Gastrocnemius medialis (tissue), 4 donors: ENCODE measurements at regions of chr12 and their contacts with region 1.

Region 1: GRCh38 chr12:10721651-10722501 is 1.2 kb downstream of the YBX3 start:
- DNase-seq: peak; percentile 98 to 99
- ATAC-seq: peak; percentile 69 to 72
- H3K4me3 ChIP-seq: peak overlapping the region; percentile 83 to 99 (median 88)
- H3K27ac ChIP-seq: peak overlapping the region; percentile 97 to 100 (median 98)
- H3K4me1 ChIP-seq: peaks cover 14 to 30% of the 10 kb centered on the region in 2 donors
- H3K27me3 ChIP-seq: no peaks in the 10 kb centered on the region
- CTCF ChIP-seq: no peak
- POLR2A ChIP-seq: peak; percentile 72 to 86

Region 2: DNA sequence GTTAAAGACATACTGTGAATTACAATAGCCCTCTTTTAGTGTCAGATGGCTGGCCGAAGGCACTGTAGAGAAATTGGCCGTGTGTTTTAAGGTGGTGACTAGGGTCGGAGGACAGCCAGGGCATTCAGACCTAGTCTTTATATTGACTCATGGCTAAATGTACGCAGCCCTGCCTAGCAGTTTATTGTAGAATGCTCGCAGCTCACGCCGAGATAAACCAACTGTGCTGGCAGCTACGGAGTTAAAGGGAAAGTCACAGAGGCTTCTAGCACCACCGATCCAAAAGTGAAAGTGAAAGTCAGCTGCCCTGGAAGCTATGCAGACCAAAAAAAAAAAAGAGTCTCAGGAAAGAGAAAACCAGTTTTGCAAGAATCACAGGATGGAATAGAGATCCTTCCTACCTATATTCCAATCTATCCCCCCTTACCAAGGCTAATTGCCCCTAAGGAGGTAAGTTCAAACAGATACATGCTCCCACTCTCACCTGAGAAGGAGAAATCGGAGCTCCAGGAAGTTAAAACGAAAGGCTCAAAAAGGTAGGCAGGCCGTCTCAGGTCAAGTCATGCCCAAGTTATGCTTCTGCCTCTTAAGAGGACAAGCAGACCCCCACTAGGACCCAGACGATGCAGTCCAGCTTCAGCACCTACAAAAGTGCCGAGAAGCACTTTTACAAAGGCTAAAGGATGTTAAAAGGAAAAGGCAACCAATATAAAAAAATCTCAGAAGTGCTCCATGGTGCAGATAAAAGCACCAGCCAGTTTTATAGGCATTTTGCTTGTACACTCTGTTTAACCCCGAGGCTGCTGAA is 356.9 kb before region 1 on chr12:
- in situ Hi-C with region 1: no loop called
- intact Hi-C with region 1: loop called (anchors 10 kb)
- DNase-seq: peak; percentile 30 to 56
- ATAC-seq: peak; percentile 81 to 86
- H3K4me3 ChIP-seq: peak overlapping the region; percentile 79 to 90 (median 84)
- H3K27ac ChIP-seq: peak overlapping the region; percentile 88 to 94 (median 90)
- H3K4me1 ChIP-seq: peaks cover 6 to 36% of the 10 kb centered on the region in 2 donors
- H3K27me3 ChIP-seq: no peaks in the 10 kb centered on the region
- CTCF ChIP-seq: no peak
- POLR2A ChIP-seq: peak in 1 of 2 donors; percentile 12

Region 3: DNA sequence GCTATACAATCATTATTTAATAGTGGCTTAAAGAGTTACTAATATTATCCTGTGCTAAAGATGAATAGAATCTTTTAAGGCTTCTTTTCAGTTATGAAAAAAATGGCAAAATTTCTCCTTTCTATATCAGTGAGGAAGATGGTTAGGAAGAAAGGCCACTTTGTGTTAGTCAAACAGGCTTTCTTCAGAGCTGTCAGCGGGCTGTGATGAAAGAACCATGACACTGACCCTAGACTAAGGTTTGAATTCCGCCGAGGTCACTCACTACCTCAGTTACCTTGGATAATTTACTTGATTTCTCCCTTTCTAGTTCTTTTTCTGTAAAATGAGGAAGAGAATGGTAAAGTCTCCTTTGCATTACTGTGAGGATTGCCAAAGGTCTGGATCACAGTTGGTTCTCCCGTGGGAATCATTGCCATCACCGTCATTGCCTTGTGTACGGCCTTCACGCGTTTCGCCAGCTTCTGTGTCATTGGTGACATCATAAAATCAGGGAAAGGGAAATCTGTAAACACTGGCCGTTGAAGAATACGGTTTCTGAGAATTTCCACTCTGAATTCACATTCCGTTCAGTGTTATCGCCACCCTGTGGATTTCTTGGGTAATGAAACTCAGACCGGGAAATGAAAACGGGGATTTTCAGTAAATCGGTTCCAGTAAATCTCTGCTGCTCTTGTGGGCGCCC is 28.0 kb after region 1 on chr12:
- in situ Hi-C with region 1: no loop called
- intact Hi-C with region 1: loop called (anchors 1 kb)
- DNase-seq: peak; percentile 45 to 66
- ATAC-seq: peak; percentile 93 to 97
- H3K4me3 ChIP-seq: peak overlapping the region; percentile 42 to 51 (median 48)
- H3K27ac ChIP-seq: peak overlapping the region; percentile 50 to 72 (median 62)
- H3K4me1 ChIP-seq: peaks cover 0 to 5% of the 10 kb centered on the region in 2 donors
- H3K27me3 ChIP-seq: no peaks in the 10 kb centered on the region
- CTCF ChIP-seq: peak; percentile 86 to 93 (median 89)
- POLR2A ChIP-seq: peak in 1 of 2 donors; percentile 13

Region 4: DNA sequence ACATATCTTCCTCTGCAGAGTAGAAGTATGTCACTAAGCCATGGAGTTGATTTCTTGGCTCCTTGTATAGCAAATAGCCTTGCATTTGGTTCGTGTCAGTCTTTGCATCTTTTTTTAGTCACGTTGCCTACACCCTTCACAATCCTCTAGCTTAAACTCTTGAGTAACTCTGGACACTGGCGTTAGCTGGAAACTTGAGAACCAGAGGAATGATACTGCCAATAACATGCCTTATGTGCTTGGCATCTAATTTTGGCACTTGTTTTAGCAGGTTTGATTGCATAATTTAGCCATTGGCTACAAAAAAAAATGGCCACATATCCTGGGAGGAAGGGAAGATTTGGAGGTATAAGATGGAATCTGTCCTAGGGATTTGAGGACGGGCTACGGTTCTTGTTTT is 1063.8 kb after region 1 on chr12:
- in situ Hi-C with region 1: loop called in 1 of 4 experiments (anchors 25 kb)
- intact Hi-C with region 1: loop called (anchors 5 kb)
- DNase-seq: peak; percentile 55 to 68
- ATAC-seq: peak; percentile 97
- H3K4me3 ChIP-seq: no peak overlapping the region
- H3K27ac ChIP-seq: peak overlapping the region; percentile 80 to 86 (median 84)
- H3K4me1 ChIP-seq: peaks cover 28 to 40% of the 10 kb centered on the region in 2 donors
- H3K27me3 ChIP-seq: no peaks in the 10 kb centered on the region
- CTCF ChIP-seq: no peak
- POLR2A ChIP-seq: no peak

Region 5: DNA sequence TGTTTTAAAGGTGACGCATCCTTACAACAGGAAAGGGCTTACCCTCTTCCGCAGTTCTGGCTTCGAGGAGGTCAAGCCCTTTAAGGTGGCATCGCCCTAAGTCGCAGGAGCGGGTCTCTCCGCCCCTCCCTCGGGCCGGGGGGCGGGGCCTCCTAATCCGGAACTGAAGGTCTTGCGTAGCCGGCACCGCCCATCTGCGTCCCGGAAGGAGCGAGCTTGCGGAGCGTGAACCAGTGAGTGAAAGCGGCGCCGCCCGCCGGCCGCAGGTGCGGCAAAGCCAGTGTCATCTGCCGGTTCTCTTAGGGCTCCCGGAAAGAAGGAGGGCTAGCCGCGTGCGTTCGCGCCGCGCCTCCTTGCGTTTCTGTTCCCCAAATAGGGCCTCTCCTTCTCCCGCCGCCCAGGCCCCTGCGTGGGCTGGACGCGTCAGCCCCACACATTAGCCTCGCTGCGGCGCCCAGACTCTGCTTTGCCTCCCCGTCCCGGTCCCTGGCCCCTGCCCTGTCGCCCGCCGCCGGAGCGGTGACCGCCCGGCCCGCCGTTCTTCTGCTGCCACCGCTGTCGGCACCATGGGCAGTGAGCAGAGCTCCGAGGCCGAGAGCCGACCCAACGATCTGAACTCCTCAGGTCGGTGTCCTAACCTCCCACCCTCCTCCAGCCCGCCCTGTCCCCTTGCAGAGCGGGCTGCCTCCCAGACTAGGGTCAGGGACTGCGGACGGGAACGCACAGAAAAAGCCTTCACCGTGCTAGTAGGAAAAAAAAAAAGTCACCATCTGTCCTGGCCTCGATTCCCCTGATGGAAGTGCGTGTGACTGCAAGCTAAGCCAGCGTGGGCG is 1635.2 kb after region 1 on chr12 and contains the start of gene BORCS5:
- in situ Hi-C with region 1: no loop called
- intact Hi-C with region 1: loop called (anchors 10 kb)
- DNase-seq: peak; percentile 92 to 96
- ATAC-seq: peak; percentile 95 to 96
- H3K4me3 ChIP-seq: peak within 1 kb of the TSS; percentile 79 to 97 (median 94)
- H3K27ac ChIP-seq: peak within 1 kb of the TSS; percentile 96 to 99 (median 98)
- H3K4me1 ChIP-seq: peaks cover 15 to 16% of the 10 kb centered on the region in 2 donors
- H3K27me3 ChIP-seq: no peaks in the 10 kb centered on the region
- CTCF ChIP-seq: peak in 3 of 5 experiments; percentile 8 to 29 (median 25)
- POLR2A ChIP-seq: peak; percentile 96 to 98
- total RNA-seq, gene BORCS5: 13.0 to 13.9 (median 13.4) TPM